Activated CD8-positive, alpha-beta T cell treated with anti-CD3 and anti-CD28 coated beads, Interleukin-2, amount 10 ng/mL, durations not matched to agents 7 days and 5 days (primary cell): ENCODE measurements at regions of chr5 and their contacts with region 1.

Region 1: GRCh38 chr5:54905943-54906537 is 79.4 kb downstream of the ESM1 start:
- DNase-seq: peak; percentile 86
- ATAC-seq: no peak
- H3K4me3 Mint-ChIP-seq: no peak overlapping the region
- H3K27ac Mint-ChIP-seq: no peak overlapping the region
- H3K4me1 Mint-ChIP-seq: peaks cover 64% of the 10 kb centered on the region
- H3K27me3 Mint-ChIP-seq: peaks cover 24% of the 10 kb centered on the region

Region 2: GRCh38 chr5:54930736-54931135 is 24.7 kb after region 1 on chr5:
- CTCF ChIA-PET with region 1: interaction called, 33 read pairs
- POLR2A ChIA-PET with region 1: no interaction called
- DNase-seq: no peak
- ATAC-seq: no peak
- H3K4me3 Mint-ChIP-seq: no peak overlapping the region
- H3K27ac Mint-ChIP-seq: no peak overlapping the region
- H3K4me1 Mint-ChIP-seq: peaks cover 17% of the 10 kb centered on the region
- H3K27me3 Mint-ChIP-seq: peaks cover 25% of the 10 kb centered on the region

Region 3: DNA sequence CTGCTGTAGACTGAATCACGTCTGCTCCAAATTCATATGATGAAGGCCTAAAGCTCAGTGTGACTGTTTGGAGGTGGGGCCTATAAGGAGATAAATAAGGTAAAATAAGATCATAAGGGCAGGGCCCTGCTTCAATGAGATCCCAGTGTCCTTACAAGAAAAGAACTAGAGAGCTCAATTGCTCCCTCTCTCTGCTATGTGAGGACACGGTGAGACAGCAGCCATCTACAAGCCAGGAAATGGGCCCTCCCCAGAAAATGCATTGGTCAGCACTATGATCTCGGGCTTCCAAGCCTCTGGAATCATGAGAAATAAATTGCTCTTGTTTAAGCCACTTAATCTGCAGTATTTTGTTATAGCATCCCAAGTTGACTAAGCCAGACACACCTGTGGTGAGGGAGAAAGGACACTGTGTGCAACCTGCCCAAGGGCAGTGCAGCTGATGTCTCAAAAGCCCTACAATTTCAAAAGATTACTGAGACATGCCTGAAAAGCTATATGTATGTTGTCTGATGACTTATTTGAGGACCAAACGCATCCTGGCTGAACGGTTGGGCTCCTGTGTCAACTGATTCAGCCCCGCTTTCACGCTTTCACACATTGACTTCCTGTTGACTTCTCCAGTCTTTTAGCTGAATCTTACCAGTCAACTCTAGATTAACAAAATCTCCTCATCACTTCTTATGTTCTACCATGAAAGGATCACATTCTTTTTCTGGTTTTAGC is 131.2 kb after region 1 on chr5:
- CTCF ChIA-PET with region 1: interaction called, 27 read pairs
- POLR2A ChIA-PET with region 1: no interaction called
- DNase-seq: peak; percentile 84
- ATAC-seq: peak; percentile 96
- H3K4me3 Mint-ChIP-seq: no peak overlapping the region
- H3K27ac Mint-ChIP-seq: peak overlapping the region; percentile 89
- H3K4me1 Mint-ChIP-seq: peaks cover 50% of the 10 kb centered on the region
- H3K27me3 Mint-ChIP-seq: no peaks in the 10 kb centered on the region

Region 4: DNA sequence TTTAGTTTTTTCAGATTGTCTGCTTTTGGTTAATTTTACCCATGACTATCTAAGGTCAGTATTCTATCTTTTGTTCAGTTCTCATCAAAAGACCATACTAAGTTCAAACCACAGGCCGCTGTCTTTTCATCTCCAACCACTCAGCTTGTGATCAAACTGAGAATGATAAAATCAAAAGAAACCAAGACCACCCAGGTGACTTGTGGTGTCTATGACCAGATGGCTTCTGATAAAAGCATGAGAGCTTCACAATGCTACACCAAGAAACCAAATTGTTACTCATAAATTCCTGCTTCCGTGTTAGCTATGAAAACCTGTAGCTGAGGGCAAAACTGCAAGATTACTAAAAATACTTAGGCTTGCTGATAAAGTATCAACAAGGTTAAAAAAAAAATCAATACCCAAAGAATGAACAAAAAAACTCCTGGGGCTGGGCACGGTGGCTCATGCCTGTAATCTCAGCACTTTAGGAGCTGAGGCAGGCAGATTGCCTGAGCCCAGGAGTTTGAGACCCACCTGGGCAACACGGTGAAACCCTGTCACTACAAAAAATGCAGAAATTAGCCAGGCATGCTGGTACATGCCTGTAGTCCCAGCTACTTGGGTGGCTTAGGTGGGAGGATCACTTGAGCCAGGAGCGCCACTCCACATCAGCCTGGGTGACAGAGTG is 228.1 kb after region 1 on chr5:
- CTCF ChIA-PET with region 1: interaction called, 11 read pairs
- POLR2A ChIA-PET with region 1: no interaction called
- DNase-seq: peak; percentile 85
- ATAC-seq: peak; percentile 93
- H3K4me3 Mint-ChIP-seq: peak overlapping the region; percentile 56
- H3K27ac Mint-ChIP-seq: peak overlapping the region; percentile 84
- H3K4me1 Mint-ChIP-seq: peaks cover 49% of the 10 kb centered on the region
- H3K27me3 Mint-ChIP-seq: peaks cover 13% of the 10 kb centered on the region

Region 5: DNA sequence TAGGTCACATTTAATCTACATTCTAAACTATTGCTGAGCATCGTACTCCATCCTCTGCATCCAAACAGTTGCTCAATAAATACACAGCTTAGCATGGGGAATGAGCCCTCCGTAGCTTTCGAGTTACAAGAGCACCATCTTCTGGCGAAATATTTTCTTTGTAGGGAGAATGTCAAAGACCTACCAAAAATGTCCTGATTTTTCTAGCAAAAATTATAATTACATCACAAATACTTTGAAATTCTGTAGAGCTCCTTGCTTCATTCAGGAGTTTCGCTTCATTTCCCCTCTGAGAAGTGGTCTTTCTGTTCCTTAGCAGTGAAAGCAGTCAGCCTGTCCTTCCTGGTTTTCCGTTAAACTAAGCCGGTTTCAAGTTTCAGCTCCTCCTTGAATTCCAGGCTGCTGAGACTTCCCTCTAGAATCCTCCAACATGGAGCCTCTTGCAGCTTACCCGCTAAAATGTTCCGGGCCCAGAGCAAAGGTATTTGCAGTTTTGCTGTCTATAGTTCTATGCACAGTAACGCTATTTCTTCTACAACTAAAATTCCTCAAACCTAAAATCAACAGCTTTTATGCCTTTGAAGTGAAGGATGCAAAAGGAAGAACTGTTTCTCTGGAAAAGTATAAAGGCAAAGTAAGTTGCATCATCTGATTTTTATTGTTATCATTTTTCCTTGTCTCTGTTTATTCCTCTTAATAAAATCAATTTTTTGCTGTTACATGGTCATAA is 253.9 kb after region 1 on chr5 and contains the start of gene GPX8:
- CTCF ChIA-PET with region 1: interaction called, 171 read pairs
- POLR2A ChIA-PET with region 1: no interaction called
- DNase-seq: peak; percentile 61
- ATAC-seq: peak; percentile 70
- H3K4me3 Mint-ChIP-seq: no peak within 1 kb of the TSS
- H3K27ac Mint-ChIP-seq: no peak within 1 kb of the TSS
- H3K4me1 Mint-ChIP-seq: peaks cover 4% of the 10 kb centered on the region
- H3K27me3 Mint-ChIP-seq: peaks cover 47% of the 10 kb centered on the region
- total RNA-seq, gene GPX8: not detected

Region 6: DNA sequence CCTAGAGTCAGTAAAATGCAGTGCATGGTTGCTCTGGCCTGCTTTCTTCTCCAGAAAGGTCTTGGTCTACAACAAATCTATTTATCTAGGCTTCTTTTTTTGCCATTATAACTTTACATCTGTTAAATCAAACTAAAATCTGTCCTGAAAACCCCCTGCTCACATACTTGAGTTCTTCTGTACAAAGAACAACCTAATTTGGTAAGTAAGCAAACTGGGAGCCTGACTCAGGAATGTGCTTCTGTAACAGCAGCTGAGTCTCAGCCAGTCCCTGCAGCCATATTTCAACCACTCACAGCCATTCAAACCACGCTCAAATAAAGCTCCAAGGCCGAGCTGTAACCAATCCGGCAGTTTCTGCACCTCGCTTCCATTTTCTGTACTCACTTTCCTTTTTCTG is 533.0 kb after region 1 on chr5:
- CTCF ChIA-PET with region 1: no interaction called
- POLR2A ChIA-PET with region 1: no interaction called
- DNase-seq: no peak
- ATAC-seq: no peak
- H3K4me3 Mint-ChIP-seq: no peak overlapping the region
- H3K27ac Mint-ChIP-seq: no peak overlapping the region
- H3K4me1 Mint-ChIP-seq: peaks cover 9% of the 10 kb centered on the region
- H3K27me3 Mint-ChIP-seq: no peaks in the 10 kb centered on the region